Esophagus muscularis mucosa (tissue), 4 donors: ENCODE measurements at regions of chr22 and their contacts with region 1.

Region 1: GRCh38 chr22:30634471-30635233 is 929 bp upstream of the SLC35E4 start:
- DNase-seq: peak; percentile 97
- H3K4me3 ChIP-seq: peak overlapping the region; percentile 75 to 83 (median 78)
- H3K27ac ChIP-seq: peak overlapping the region; percentile 91 to 95 (median 93)
- H3K4me1 ChIP-seq: peaks cover 28 to 48% (median 47%) of the 10 kb centered on the region in 4 donors
- H3K27me3 ChIP-seq: no peaks in the 10 kb centered on the region
- CTCF ChIP-seq: peak; percentile 96 to 98 (median 96)
- EP300 ChIP-seq: no peak
- POLR2A ChIP-seq: no peak

Region 2: GRCh38 chr22:30667494-30668385 is 33.1 kb after region 1 on chr22 and contains the start of gene DUSP18:
- intact Hi-C with region 1: loop called (anchors 2 kb)
- DNase-seq: peak; percentile 98
- H3K4me3 ChIP-seq: peak within 1 kb of the TSS; percentile 79 to 91 (median 81)
- H3K27ac ChIP-seq: peak within 1 kb of the TSS; percentile 61 to 65 (median 62)
- H3K4me1 ChIP-seq: peaks cover 9 to 25% (median 24%) of the 10 kb centered on the region in 4 donors
- H3K27me3 ChIP-seq: no peaks in the 10 kb centered on the region
- CTCF ChIP-seq: peak; percentile 13 to 51 (median 32)
- EP300 ChIP-seq: no peak
- POLR2A ChIP-seq: no peak
- total RNA-seq, gene DUSP18: 6.5 to 11.5 (median 9.8) TPM

Region 3: GRCh38 chr22:30754971-30755756 is 120.5 kb after region 1 on chr22:
- intact Hi-C with region 1: loop called (anchors 1 kb)
- DNase-seq: no peak
- H3K4me3 ChIP-seq: no peak overlapping the region
- H3K27ac ChIP-seq: no peak overlapping the region
- H3K4me1 ChIP-seq: no peaks in the 10 kb centered on the region
- H3K27me3 ChIP-seq: no peaks in the 10 kb centered on the region
- CTCF ChIP-seq: peak; percentile 53 to 70 (median 63)
- EP300 ChIP-seq: no peak
- POLR2A ChIP-seq: no peak

Region 4: DNA sequence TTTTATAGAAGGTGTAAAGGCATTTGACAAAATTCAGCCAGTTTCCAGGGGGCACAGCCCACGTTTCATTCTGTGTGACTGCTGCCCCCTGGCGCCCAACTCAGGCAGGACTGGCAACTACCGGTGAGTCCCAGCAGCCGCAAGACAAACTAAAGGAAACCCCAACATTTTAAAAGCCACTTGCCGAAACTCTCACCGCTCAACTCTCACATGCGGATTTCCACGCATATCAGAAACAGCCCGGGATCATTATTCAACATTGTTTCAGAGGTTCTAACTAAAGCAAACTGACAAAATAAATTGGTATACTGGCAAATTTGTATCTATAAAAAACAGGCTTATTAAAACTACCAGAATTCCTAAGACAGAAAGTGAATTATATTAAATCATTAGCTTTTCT is 285.8 kb after region 1 on chr22:
- intact Hi-C with region 1: loop called (anchors 1 kb)
- DNase-seq: peak; percentile 95
- H3K4me3 ChIP-seq: peak overlapping the region in 1 of 4 donors; percentile 25
- H3K27ac ChIP-seq: no peak overlapping the region
- H3K4me1 ChIP-seq: peaks cover 8 to 18% (median 15%) of the 10 kb centered on the region in 4 donors
- H3K27me3 ChIP-seq: no peaks in the 10 kb centered on the region
- CTCF ChIP-seq: peak; percentile 82 to 93 (median 90)
- EP300 ChIP-seq: no peak
- POLR2A ChIP-seq: no peak